ENCODE measurements at regions of chr9 and their contacts with region 1.

Region 1: DNA sequence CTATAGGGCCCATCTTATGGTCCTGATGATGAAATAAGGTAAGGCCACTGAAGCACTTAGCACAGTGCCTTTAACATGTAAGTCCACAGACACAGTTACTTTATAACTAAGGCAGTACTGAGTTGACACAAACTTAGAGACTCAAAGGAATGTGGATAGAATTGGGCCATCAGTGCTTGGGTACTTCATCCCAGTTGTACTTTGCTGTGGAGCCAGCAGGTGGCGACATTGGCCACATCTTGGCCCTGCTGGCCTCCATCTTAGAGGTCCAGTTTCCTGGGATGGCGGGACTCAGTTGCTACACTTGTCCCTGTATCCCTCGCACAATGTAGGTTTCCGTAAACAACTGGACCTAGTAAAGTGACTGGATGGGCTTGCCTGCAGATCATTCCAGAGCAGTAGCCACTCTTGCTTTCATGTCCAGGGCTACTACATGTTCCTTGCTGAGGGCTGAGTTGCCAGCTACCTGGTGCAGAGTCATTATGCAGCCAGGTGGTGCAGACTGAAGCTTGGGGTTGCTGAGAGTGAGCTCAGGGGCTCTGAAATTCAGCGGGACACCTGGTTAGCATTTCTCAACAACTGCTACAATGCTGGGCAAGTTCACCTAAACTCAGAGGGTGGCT is 10.6 kb downstream of the MTAP start:
- DNase-seq: no peak
- ATAC-seq: peak; percentile 91
- H3K4me3 ChIP-seq: no peak overlapping the region
- H3K27ac ChIP-seq: no peak overlapping the region
- H3K4me1 ChIP-seq: peaks cover 11% of the 10 kb centered on the region
- H3K27me3 ChIP-seq: no peaks in the 10 kb centered on the region
- CTCF ChIP-seq: peak; percentile 84 to 98 (median 88)
- EP300 ChIP-seq: no peak
- POLR2A ChIP-seq: no peak
- RAD21 ChIP-seq: peak; percentile 91

Region 2: GRCh38 chr9:21831961-21832509 is 19.0 kb after region 1 on chr9:
- CTCF ChIA-PET with region 1: interaction called, 19 read pairs
- POLR2A ChIA-PET with region 1: no interaction called
- RAD21 ChIA-PET with region 1: interaction called, 8 read pairs
- SMC1A ChIA-PET with region 1: interaction called, 15 read pairs
- in situ Hi-C with region 1: no loop called
- intact Hi-C with region 1: no loop called
- DNase-seq: peak; percentile 71
- ATAC-seq: peak; percentile 88
- H3K4me3 ChIP-seq: peak overlapping the region; percentile 24; the same call in 1 of the 2 replicates
- H3K27ac ChIP-seq: peak overlapping the region; percentile 77
- H3K4me1 ChIP-seq: peaks cover 38% of the 10 kb centered on the region
- H3K27me3 ChIP-seq: no peaks in the 10 kb centered on the region
- CTCF ChIP-seq: no peak
- EP300 ChIP-seq: peak; percentile 62 to 71; a peak in 2 of 4 replicates
- POLR2A ChIP-seq: no peak
- RAD21 ChIP-seq: no peak

Region 3: DNA sequence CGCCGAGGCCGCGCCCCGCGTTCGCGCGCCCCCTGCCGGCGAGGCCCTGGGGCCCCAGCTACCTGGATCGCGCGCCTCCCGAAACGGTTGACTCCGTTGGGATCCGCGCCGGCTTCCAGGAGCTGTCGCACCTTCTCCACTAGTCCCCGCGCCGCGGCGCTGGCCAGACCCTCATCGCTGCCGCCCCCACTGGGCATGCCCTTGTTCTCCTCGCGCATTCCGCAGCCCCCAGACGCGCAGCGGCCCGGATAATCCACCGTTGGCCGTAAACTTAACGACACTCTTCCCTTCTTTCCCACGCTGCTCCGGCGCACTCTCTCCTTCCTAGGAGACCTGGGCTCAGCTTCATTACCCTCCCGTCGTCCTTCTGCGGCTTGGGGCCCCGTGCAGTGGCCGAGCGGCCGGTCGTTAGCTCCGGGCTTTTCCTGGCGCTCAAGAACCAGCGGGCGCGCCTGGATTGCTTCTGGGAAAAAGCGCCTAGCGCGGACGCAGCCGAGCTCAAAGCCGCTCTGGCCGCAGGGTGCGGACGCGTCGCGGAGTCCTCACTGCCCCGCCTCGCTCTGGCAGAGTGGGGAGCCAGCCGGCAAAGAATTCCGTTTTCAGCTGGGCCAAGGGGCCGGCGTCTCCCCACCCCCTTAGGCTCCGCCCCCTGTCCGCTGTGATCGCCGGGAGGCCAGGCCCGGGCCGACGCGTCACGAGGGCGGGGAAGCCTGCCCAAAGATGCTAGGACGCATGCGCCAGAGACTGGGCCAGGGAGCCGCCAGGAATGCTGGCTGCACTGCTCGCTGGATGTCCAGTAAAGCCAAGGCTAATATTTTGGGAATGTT is 195.9 kb after region 1 on chr9 and contains the start of gene CDKN2B:
- CTCF ChIA-PET with region 1: interaction called, 179 read pairs
- POLR2A ChIA-PET with region 1: interaction called, 4 read pairs
- RAD21 ChIA-PET with region 1: interaction called, 49 read pairs
- SMC1A ChIA-PET with region 1: interaction called, 121 read pairs
- in situ Hi-C with region 1: loop called (anchors 5 kb)
- intact Hi-C with region 1: loop called (anchors 1 kb)
- DNase-seq: no peak
- ATAC-seq: peak; percentile 98
- H3K4me3 ChIP-seq: peak within 1 kb of the TSS; percentile 66
- H3K27ac ChIP-seq: no peak within 1 kb of the TSS
- H3K4me1 ChIP-seq: peaks cover 10% of the 10 kb centered on the region
- H3K27me3 ChIP-seq: peaks cover 0 to 2% of the 10 kb centered on the region in 2 experiments; a peak in 1 of 4 replicates
- CTCF ChIP-seq: peak; percentile 87 to 88 (median 87)
- EP300 ChIP-seq: no peak
- POLR2A ChIP-seq: peak; percentile 59
- RAD21 ChIP-seq: peak; percentile 65
- polyA plus RNA-seq, gene CDKN2B: 0.04 to 0.08 TPM

Region 4: DNA sequence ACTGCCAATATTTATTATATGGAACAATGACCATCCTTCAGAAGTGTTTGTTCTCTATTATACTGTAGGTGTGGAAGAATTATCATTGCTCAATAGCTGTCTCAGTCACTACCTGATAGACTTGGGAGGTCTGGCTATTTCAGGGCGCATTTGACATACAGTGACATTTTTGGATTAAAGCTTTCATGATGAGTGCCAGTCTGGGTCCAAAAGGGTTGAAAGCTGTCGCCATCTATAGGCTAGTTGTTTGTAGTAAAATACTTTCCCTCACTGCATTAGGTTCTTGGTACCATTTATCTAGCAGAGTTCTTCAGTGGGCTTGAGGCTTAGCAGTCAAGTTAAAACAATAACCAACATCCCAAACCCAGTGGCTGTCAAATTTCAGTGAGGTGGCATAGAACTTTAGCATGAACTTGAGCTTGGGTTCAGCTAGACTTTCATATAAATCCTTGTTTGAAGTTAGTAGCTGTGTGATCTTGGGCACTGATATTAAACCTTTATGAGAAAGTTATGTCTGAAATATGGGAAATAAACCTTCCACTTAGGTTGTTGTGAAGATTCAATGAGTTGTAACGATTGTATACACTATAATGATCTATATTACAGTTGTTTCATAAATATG is 306.6 kb after region 1 on chr9:
- CTCF ChIA-PET with region 1: interaction called, 67 read pairs
- POLR2A ChIA-PET with region 1: no interaction called
- RAD21 ChIA-PET with region 1: interaction called, 24 read pairs
- SMC1A ChIA-PET with region 1: interaction called, 16 read pairs
- in situ Hi-C with region 1: loop called (anchors 10 kb)
- intact Hi-C with region 1: loop called (anchors 1 kb)
- DNase-seq: no peak
- ATAC-seq: peak; percentile 76
- H3K4me3 ChIP-seq: no peak overlapping the region
- H3K27ac ChIP-seq: no peak overlapping the region
- H3K4me1 ChIP-seq: no peaks in the 10 kb centered on the region
- H3K27me3 ChIP-seq: peaks cover 0 to 8% of the 10 kb centered on the region in 2 experiments; a peak in 2 of 4 replicates
- CTCF ChIP-seq: peak; percentile 39 to 58 (median 55); a peak in 5 of 6 replicates
- EP300 ChIP-seq: no peak
- POLR2A ChIP-seq: no peak
- RAD21 ChIP-seq: peak; percentile 68

Region 5: DNA sequence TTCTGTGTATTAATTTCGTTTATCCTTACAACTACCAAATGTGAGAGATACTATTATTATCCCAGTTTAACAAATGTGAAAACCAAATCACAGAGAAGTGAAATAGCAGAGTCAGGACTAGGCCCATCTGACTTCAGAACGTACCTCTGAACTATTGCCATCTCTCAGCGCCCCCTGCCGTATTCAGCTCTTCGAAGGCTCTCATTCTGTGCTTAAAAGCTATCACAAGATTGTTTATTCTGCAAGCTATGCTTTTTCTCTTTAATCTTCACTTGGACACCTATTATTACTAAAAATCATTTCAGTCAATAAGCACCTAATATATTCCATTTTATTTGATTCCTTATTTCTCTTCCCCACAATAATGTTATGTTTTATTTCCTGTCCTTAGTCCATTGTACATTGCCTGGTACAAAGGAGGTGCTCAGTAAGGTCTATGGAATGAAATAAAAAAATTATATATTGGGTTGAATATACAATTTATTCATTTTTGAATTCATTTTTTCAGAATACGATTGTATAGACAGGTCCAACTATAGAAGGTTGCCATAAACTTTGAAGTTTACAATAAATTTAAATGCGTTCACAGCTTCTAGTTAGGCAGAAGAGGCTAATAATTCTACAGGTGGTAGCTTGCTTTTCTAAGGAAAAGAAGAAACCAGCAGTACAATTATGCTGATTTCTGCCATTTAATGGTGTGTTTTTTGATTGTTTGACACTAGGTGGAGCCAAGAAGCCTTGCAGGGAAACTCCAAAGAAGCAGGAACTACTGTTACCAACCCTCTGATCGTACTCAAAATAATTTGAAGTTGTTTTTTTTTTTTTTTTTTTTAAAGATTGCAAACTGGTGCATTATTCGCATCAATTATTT is 431.3 kb after region 1 on chr9:
- CTCF ChIA-PET with region 1: interaction called, 63 read pairs
- POLR2A ChIA-PET with region 1: no interaction called
- RAD21 ChIA-PET with region 1: interaction called, 19 read pairs
- SMC1A ChIA-PET with region 1: interaction called, 31 read pairs
- in situ Hi-C with region 1: loop called (anchors 5 kb)
- intact Hi-C with region 1: loop called (anchors 1 kb)
- DNase-seq: no peak
- ATAC-seq: peak; percentile 72
- H3K4me3 ChIP-seq: no peak overlapping the region
- H3K27ac ChIP-seq: no peak overlapping the region
- H3K4me1 ChIP-seq: peaks cover 19% of the 10 kb centered on the region
- H3K27me3 ChIP-seq: peaks cover 0 to 7% of the 10 kb centered on the region in 2 experiments; a peak in 2 of 4 replicates
- CTCF ChIP-seq: peak; percentile 53 to 59 (median 59)
- EP300 ChIP-seq: no peak
- POLR2A ChIP-seq: no peak
- RAD21 ChIP-seq: peak; percentile 76

Measured in GM12878 (cell line).